ENCODE measurements at regions of chr10 and their contacts with region 1.

Region 1: DNA sequence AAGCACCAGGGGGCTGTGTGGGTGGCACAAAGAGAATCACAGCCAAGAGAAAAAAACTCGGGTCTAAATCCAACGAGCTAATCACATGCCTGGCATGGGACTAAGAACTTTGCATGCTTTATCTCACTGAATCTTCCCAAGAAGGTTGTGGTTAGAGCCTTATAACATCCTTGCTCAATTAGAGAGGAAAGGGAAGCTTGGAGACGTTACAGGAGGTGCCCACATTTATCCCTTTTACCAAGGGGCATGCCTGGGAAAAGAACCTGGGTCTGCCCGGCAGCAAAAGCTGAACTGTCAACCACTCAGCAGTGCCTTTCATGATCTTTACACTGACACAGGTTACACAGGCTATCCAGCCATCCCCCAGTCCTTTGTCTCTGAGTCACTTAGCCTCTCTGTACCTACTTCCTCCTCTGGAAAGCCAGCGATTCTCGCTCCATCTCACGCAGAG is 190.1 kb downstream of the PRPF18 start:
- DNase-seq: no peak
- ATAC-seq: no peak
- H3K4me3 ChIP-seq: no peak overlapping the region
- H3K4me3 Mint-ChIP-seq: no peak overlapping the region
- H3K27ac ChIP-seq: no peak overlapping the region
- H3K27ac Mint-ChIP-seq: no peak overlapping the region
- H3K4me1 ChIP-seq: peaks cover 0 to 4% of the 10 kb centered on the region in 2 donors
- H3K4me1 Mint-ChIP-seq: peaks cover 0 to 6% (median 0%) of the 10 kb centered on the region in 7 donors
- H3K27me3 ChIP-seq: no peaks in the 10 kb centered on the region
- H3K27me3 Mint-ChIP-seq: peaks cover 8 to 18% (median 11%) of the 10 kb centered on the region in 5 donors

Region 2: GRCh38 chr10:13206546-13207443 is 570.1 kb before region 1 on chr10:
- CTCF ChIA-PET with region 1: no interaction called
- POLR2A ChIA-PET with region 1: no interaction called
- intact Hi-C with region 1: no loop called
- DNase-seq: no peak
- ATAC-seq: no peak
- H3K4me3 ChIP-seq: no peak overlapping the region
- H3K4me3 Mint-ChIP-seq: no peak overlapping the region
- H3K27ac ChIP-seq: no peak overlapping the region
- H3K27ac Mint-ChIP-seq: no peak overlapping the region
- H3K4me1 ChIP-seq: no peaks in the 10 kb centered on the region
- H3K4me1 Mint-ChIP-seq: no peaks in the 10 kb centered on the region
- H3K27me3 ChIP-seq: no peaks in the 10 kb centered on the region
- H3K27me3 Mint-ChIP-seq: no peaks in the 10 kb centered on the region

Region 3: GRCh38 chr10:13613519-13613918 is 163.4 kb before region 1 on chr10:
- CTCF ChIA-PET with region 1: no interaction called
- POLR2A ChIA-PET with region 1: no interaction called
- intact Hi-C with region 1: loop called in 1 of 2 experiments (anchors 1 kb)
- DNase-seq: peak in 2 of 9 donors; percentile 0 to 21
- ATAC-seq: no peak
- H3K4me3 ChIP-seq: no peak overlapping the region
- H3K4me3 Mint-ChIP-seq: no peak overlapping the region
- H3K27ac ChIP-seq: no peak overlapping the region
- H3K27ac Mint-ChIP-seq: no peak overlapping the region
- H3K4me1 ChIP-seq: no peaks in the 10 kb centered on the region
- H3K4me1 Mint-ChIP-seq: peaks cover 0 to 8% (median 0%) of the 10 kb centered on the region in 7 donors
- H3K27me3 ChIP-seq: no peaks in the 10 kb centered on the region
- H3K27me3 Mint-ChIP-seq: no peaks in the 10 kb centered on the region

Region 4: GRCh38 chr10:13717931-13718772 is 58.7 kb before region 1 on chr10:
- CTCF ChIA-PET with region 1: no interaction called
- POLR2A ChIA-PET with region 1: no interaction called
- intact Hi-C with region 1: loop called in 1 of 2 experiments (anchors 5 kb)
- DNase-seq: peak in 8 of 9 donors; percentile 13 to 65 (median 52)
- ATAC-seq: peak; percentile 80
- H3K4me3 ChIP-seq: peak overlapping the region; percentile 55
- H3K4me3 Mint-ChIP-seq: peak overlapping the region; percentile 66 to 89 (median 80)
- H3K27ac ChIP-seq: no peak overlapping the region
- H3K27ac Mint-ChIP-seq: peak overlapping the region in 5 of 9 donors; percentile 19 to 84 (median 58)
- H3K4me1 ChIP-seq: peaks cover 0 to 19% of the 10 kb centered on the region in 2 donors
- H3K4me1 Mint-ChIP-seq: peaks cover 10 to 20% (median 15%) of the 10 kb centered on the region in 7 donors
- H3K27me3 ChIP-seq: no peaks in the 10 kb centered on the region
- H3K27me3 Mint-ChIP-seq: peaks cover 0 to 7% (median 0%) of the 10 kb centered on the region in 5 donors